Common myeloid progenitor, CD34-positive (primary cell): ENCODE measurements at regions of chr11 and their contacts with region 1.

Region 1: GRCh38 chr11:62694455-62695167 is 5.3 kb upstream of the LRRN4CL start:
- DNase-seq: peak; percentile 80 to 89 (median 83)
- H3K4me3 ChIP-seq: no peak overlapping the region
- H3K27ac ChIP-seq: no peak overlapping the region
- H3K4me1 ChIP-seq: no peaks in the 10 kb centered on the region
- H3K27me3 ChIP-seq: no peaks in the 10 kb centered on the region

Region 2: GRCh38 chr11:62612366-62613290 is 82.0 kb before region 1 on chr11 and contains the starts of genes EML3 and ROM1:
- CTCF ChIA-PET with region 1: interaction called, 11 read pairs
- POLR2A ChIA-PET with region 1: no interaction called
- DNase-seq: peak; percentile 88 to 95 (median 94)
- H3K4me3 ChIP-seq: peak within 1 kb of the TSS; percentile 52 to 94 (median 79)
- H3K27ac ChIP-seq: peak within 1 kb of the TSS; percentile 46 to 87
- H3K4me1 ChIP-seq: peaks cover 0 to 48% (median 34%) of the 10 kb centered on the region in 4 experiments
- H3K27me3 ChIP-seq: no peaks in the 10 kb centered on the region

Region 3: DNA sequence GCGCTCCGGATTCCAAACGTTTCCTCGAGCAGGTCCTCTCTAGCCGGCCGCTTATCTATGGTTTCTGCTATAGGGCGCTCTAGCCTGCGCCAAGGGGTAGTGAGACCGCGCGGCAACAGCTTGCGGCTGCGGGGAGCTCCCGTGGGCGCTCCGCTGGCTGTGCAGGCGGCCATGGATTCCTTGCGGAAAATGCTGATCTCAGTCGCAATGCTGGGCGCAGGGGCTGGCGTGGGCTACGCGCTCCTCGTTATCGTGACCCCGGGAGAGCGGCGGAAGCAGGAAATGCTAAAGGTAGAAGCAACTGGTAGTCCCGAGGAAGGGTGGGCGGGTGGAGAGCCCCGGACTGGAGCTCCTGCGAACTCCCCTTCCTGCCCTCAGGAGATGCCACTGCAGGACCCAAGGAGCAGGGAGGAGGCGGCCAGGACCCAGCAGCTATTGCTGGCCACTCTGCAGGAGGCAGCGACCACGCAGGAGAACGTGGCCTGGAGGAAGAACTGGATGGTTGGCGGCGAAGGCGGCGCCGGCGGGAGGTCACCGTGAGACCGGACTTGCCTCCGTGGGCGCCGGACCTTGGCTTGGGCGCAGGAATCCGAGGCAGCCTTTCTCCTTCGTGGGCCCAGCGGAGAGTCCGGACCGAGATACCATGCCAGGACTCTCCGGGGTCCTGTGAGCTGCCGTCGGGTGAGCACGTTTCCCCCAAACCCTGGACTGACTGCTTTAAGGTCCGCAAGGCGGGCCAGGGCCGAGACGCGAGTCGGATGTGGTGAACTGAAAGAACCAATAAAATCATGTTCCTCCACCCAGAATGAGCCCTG is 22.8 kb before region 1 on chr11 and contains the starts of genes LBHD1 and UQCC3:
- CTCF ChIA-PET with region 1: interaction called, 11 read pairs
- POLR2A ChIA-PET with region 1: no interaction called
- DNase-seq: peak; percentile 92 to 96 (median 94)
- H3K4me3 ChIP-seq: peak within 1 kb of the TSS; percentile 82 to 100 (median 94)
- H3K27ac ChIP-seq: peak within 1 kb of the TSS; percentile 84 to 89
- H3K4me1 ChIP-seq: peaks cover 0 to 49% (median 31%) of the 10 kb centered on the region in 4 experiments
- H3K27me3 ChIP-seq: no peaks in the 10 kb centered on the region

Region 4: GRCh38 chr11:62678770-62679696 is 15.6 kb before region 1 on chr11 and contains the start of gene UBXN1:
- CTCF ChIA-PET with region 1: interaction called, 98 read pairs
- POLR2A ChIA-PET with region 1: interaction called, 3 read pairs
- DNase-seq: peak; percentile 90 to 92 (median 90)
- H3K4me3 ChIP-seq: peak within 1 kb of the TSS; percentile 71 to 96 (median 90)
- H3K27ac ChIP-seq: peak within 1 kb of the TSS; percentile 93 to 96
- H3K4me1 ChIP-seq: peaks cover 2 to 26% (median 16%) of the 10 kb centered on the region in 4 experiments
- H3K27me3 ChIP-seq: no peaks in the 10 kb centered on the region

Region 5: DNA sequence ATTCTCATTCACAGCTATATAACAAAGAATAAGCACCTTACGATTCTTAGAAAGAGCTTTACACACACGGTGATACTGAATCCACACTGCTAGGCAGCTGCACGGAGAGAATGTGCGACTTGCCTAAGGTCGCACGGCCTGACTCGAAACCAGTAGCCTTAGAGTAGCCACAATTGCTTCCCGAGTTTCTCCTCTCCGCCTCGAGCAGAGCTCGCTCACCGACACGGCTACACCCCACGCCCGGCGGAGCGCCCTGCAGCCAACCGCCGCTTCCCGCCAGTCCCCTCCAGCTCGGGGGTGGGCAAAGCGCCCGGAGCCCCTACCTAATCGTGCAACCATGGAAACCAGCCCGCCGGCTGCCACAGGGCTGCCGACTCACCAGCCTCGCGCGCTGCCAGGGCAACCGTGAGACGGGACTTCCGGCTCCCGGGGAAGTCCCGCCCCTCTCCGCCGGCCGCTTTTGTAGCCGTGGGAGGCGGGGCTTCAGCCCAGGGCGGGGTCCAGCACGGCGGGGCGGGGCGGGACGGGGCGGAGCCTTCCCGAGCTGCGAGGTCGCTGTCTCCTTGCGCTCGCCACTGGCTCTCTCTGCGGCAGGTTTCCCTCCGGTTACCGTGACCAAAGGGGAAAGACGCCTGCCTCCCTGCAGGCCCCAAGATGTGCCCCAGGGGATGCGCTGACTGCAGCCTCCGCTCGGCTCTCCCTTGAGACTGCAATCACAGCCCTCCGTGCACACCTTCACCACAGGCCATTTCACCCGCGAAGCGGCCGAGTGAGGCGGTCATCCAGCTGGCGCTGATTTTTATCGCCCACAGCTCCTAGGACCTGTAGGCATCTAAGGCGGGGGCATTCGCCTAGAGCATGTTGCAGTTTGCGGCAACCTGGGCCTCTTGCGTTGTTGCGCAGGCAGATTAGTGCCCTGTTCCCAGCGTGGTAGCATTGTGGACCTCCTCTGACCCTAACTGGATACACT is 11.6 kb after region 1 on chr11:
- CTCF ChIA-PET with region 1: interaction called, 20 read pairs
- POLR2A ChIA-PET with region 1: no interaction called
- DNase-seq: peak; percentile 95 to 98 (median 98)
- H3K4me3 ChIP-seq: peak overlapping the region; percentile 33 to 90 (median 76)
- H3K27ac ChIP-seq: peak overlapping the region; percentile 89 to 92
- H3K4me1 ChIP-seq: peaks cover 8 to 56% (median 44%) of the 10 kb centered on the region in 4 experiments
- H3K27me3 ChIP-seq: no peaks in the 10 kb centered on the region

Region 6: DNA sequence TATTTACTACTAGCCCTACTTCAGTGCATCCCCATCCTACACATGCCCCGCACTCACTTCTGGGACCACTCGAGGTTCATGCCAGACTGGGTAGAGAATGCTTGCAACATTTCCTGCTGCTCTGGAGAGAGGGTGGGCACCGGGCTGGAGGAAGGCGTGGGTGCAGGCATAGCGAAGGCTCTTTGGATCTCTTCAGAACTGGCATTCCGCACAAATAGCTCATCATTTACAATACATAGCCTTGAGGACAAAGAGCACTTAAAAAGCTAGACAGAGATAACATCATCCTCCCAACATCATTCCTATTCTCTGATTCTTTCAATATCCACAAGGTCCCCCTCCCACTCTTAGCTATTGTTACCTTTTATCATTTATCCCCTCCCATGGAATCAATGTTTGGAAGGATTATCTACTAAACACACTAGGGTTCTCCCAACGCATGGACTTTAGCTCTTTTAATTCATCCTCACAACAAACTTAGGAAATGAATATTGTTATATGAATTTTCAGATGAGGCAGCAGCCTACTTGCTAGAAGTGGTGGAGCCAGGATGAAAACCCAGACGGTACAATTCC is 99.7 kb after region 1 on chr11:
- CTCF ChIA-PET with region 1: no interaction called
- POLR2A ChIA-PET with region 1: no interaction called
- DNase-seq: no peak
- H3K4me3 ChIP-seq: no peak overlapping the region
- H3K27ac ChIP-seq: no peak overlapping the region
- H3K4me1 ChIP-seq: peaks cover 2 to 27% (median 27%) of the 10 kb centered on the region in 4 experiments
- H3K27me3 ChIP-seq: no peaks in the 10 kb centered on the region